Tibial artery (tissue), 4 donors: ENCODE measurements at regions of chr3 and their contacts with region 1.

Region 1: GRCh38 chr3:49406571-49407566 is 4.9 kb downstream of the RHOA start:
- DNase-seq: no peak
- H3K4me3 ChIP-seq: no peak overlapping the region
- H3K27ac ChIP-seq: peak overlapping the region; percentile 55 to 96
- H3K4me1 ChIP-seq: peaks cover 0 to 77% (median 41%) of the 10 kb centered on the region in 4 donors
- H3K27me3 ChIP-seq: no peaks in the 10 kb centered on the region
- CTCF ChIP-seq: no peak

Region 2: DNA sequence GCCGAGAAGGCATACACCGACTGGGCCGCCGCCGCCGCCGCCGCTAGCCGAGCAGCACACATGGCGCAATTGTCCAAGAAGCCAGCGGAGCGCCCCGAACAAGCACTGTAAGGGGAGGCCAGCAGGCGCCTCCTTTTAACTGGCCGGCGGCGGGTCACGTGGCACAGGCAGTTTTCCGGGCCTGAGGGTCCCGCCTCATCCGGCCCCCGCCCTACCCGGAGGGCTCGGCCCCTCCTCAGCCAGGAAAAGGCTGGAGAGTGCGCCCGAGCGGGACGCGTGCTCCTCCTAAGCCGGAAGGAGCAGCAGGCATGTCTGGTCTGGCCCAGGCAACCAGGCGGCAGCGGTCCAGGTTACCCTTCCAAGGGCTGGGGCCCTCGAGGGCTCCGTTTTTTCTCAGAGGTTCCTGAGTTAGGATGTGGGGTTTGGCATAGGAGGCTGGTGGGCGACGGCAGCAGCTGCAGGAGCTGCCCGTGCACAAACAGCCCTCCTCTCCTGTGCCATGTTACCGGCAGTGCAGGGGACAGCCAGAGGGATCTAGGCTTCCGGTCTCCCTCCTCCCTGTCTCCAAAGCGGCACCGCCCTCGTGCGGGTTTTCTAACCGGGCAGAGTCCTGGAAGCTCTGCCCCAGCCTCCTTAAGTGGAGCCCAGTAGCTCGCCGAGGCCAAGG is 48.5 kb before region 1 on chr3 and contains the start of gene GPX1:
- intact Hi-C with region 1: loop called (anchors 10 kb)
- DNase-seq: peak; percentile 96 to 97
- H3K4me3 ChIP-seq: peak within 1 kb of the TSS; percentile 75 to 84
- H3K27ac ChIP-seq: peak within 1 kb of the TSS; percentile 86 to 92
- H3K4me1 ChIP-seq: peaks cover 0 to 41% (median 23%) of the 10 kb centered on the region in 4 donors
- H3K27me3 ChIP-seq: no peaks in the 10 kb centered on the region
- CTCF ChIP-seq: no peak